Activated CD8-positive, alpha-beta T cell treated with anti-CD3 and anti-CD28 coated beads for 36 hours (primary cell): ENCODE measurements at regions of chr17 and their contacts with region 1.

Region 1: DNA sequence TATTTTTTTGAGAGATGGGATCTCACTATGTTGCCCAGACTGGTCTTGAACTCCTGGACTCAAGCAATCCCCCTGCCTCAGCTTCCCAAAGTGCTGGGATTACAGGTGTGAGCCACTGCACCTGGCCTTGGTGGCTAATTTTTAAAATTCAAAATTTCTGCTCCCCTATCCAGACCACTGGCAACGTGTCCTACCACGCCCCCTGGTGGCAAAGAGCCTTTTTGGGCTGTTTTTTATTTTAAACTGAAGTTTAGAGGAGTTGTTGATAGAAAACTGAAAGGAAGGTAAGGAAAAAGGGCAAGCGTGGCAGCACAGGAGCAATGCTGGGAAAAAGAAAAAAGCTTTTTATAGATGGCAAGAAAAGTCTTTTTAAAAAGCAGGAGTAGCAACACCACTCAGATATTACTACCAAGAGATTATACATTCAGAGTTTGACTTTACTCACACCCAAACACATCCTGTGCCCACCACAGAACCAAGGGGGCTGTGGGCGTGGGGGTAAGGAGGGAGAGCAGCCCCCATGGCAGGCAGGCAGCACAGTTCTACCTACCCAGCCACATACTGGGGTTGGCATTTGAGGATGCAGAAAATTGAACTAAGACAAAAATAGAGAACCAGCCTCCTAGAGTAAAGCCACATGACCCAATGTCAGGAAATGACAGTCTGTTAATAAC is 4.2 kb upstream of the MXRA7 start:
- DNase-seq: peak; percentile 90
- ATAC-seq: no peak
- H3K4me3 Mint-ChIP-seq: peak overlapping the region; percentile 53
- H3K27ac Mint-ChIP-seq: peak overlapping the region; percentile 92
- H3K4me1 Mint-ChIP-seq: peaks cover 61% of the 10 kb centered on the region
- H3K27me3 Mint-ChIP-seq: no peaks in the 10 kb centered on the region
- CTCF ChIP-seq: peak; percentile 88

Region 2: GRCh38 chr17:76492989-76493501 is 221.9 kb before region 1 on chr17:
- CTCF ChIA-PET with region 1: no interaction called
- POLR2A ChIA-PET with region 1: no interaction called
- intact Hi-C with region 1: no loop called
- DNase-seq: peak; percentile 80
- ATAC-seq: peak; percentile 64
- H3K4me3 Mint-ChIP-seq: peak overlapping the region; percentile 58
- H3K27ac Mint-ChIP-seq: peak overlapping the region; percentile 90
- H3K4me1 Mint-ChIP-seq: peaks cover 55% of the 10 kb centered on the region
- H3K27me3 Mint-ChIP-seq: no peaks in the 10 kb centered on the region
- CTCF ChIP-seq: no peak

Region 3: GRCh38 chr17:76671123-76671911 is 43.6 kb before region 1 on chr17:
- CTCF ChIA-PET with region 1: interaction called, 11 read pairs
- POLR2A ChIA-PET with region 1: interaction called, 5 read pairs
- intact Hi-C with region 1: no loop called
- DNase-seq: peak; percentile 100
- ATAC-seq: peak; percentile 99
- H3K4me3 Mint-ChIP-seq: peak overlapping the region; percentile 89
- H3K27ac Mint-ChIP-seq: peak overlapping the region; percentile 95
- H3K4me1 Mint-ChIP-seq: peaks cover 32% of the 10 kb centered on the region
- H3K27me3 Mint-ChIP-seq: no peaks in the 10 kb centered on the region
- CTCF ChIP-seq: no peak

Region 4: DNA sequence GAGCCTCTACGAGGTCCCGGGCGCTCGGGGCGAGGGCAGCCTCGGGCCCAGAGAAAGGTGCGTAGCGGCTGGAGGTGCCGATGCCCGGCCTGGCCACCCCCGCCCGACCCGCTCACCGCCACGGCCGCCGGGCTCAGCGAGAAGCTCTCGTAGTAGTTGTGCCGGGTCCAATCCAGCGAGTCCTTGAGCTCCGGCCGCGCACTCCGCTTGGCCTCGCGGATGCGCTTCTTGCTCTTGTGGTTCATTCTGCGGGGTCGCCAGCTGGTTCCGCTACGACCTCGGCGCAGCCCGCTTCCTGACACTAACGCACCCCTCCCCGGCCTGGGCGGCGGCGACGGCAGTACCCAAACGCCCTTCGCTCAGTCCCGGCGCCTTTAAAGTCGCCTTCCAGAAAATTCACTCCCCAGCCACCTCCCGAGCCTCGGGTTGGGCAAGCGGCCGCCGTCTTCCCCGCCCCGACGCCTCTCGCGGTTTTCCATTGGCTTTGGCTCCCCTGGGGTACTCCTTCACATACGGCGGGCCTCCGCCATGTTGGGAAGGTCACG is 11.3 kb after region 1 on chr17 and contains the start of gene JMJD6:
- CTCF ChIA-PET with region 1: interaction called, 83 read pairs
- POLR2A ChIA-PET with region 1: interaction called, 111 read pairs
- intact Hi-C with region 1: no loop called
- DNase-seq: peak; percentile 96
- ATAC-seq: peak; percentile 87
- H3K4me3 Mint-ChIP-seq: peak within 1 kb of the TSS; percentile 98
- H3K27ac Mint-ChIP-seq: peak within 1 kb of the TSS; percentile 95
- H3K4me1 Mint-ChIP-seq: peaks cover 40% of the 10 kb centered on the region
- H3K27me3 Mint-ChIP-seq: no peaks in the 10 kb centered on the region
- CTCF ChIP-seq: no peak
- total RNA-seq, gene JMJD6: 77.9 to 80.3 TPM

Region 5: DNA sequence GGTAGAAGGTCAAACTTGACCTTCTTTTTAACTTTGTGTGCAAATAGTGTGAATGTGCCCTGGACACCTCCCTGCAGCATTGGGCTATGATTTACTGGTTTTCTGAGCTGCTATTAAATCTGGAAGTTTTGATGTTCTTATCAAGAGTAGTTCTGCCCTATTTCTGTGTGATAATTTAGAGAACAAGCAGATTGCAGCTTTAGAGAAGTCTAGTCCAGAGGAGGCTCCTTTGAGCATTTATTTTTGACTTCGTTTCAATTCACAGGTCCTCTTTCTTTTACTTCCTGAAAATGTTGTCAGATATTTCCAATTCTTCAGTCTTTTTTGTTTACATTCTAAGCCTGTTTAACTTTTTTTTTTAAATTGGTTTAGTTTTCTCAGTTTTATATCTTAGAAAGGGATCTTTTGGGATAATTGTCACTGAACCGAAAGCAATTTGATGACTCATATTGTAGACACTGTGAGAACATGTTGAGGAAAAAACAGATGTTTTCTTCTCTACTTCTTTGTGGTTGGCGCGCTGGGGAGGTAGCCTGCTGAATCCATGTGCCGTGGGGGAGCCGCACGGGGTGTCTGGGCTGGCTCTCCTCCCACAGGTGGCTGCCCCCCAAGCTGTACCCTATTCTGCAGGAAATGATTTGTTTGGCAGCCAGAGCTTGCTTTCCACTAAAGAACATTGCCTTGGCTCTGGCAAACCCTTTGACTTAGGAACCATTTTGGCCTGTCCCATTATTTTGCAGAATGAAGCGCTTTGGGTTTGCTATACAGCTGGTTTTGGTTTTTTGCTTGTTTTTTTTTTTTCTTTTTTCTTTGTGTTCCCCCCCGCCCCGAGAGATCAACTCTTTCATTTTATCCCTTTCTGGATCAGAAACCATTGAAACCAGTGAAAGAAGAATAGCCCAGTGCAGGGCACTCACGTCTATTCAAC is 76.4 kb after region 1 on chr17:
- CTCF ChIA-PET with region 1: no interaction called
- POLR2A ChIA-PET with region 1: no interaction called
- intact Hi-C with region 1: no loop called
- DNase-seq: peak; percentile 68
- ATAC-seq: peak; percentile 72
- H3K4me3 Mint-ChIP-seq: peak overlapping the region; percentile 17
- H3K27ac Mint-ChIP-seq: peak overlapping the region; percentile 31
- H3K4me1 Mint-ChIP-seq: peaks cover 13% of the 10 kb centered on the region
- H3K27me3 Mint-ChIP-seq: no peaks in the 10 kb centered on the region
- CTCF ChIP-seq: no peak